ENCODE measurements at regions of chr7 and their contacts with region 1.

Region 1: DNA sequence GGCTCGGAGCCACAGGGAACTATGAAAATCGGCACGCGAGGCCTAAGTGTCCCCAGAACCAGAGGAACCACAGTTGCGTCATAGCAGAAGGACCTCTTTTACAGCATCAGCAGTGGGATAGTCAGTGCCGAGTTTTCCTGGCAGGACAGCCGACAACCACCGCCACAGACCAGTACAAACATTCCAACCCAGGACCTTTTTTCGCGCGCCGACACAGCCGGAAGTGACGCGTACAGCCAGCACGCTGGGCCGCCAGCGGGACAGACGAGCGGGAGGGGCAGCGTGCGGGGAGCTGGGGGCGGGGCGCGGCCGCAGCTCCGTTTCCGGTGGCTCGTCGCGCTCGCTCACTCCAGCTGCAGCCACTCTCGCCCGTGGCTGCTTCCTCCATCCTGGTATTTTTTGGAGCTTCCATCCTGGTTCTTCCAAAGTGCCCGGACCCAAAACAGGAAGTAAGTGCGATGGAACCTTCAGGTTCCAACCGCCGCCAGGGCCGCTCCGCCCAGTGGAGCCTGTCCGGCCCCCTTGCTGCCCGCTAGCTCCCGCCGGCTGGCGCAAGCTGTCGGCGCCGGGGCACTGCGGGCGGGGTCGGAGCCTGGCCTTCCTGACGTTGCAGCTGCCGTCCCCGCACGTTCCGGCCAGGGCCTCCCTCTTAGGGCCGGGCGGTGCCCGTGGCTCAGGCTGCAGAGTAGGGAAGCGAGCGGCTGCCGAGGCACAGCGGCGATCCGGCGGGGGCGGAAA is at the start of gene DMTF1:
- DNase-seq: peak; percentile 97
- H3K4me3 ChIP-seq: peak within 1 kb of the TSS; percentile 51 to 96 (median 58)
- H3K27ac ChIP-seq: peak within 1 kb of the TSS; percentile 81
- H3K4me1 ChIP-seq: peaks cover 24% of the 10 kb centered on the region
- H3K27me3 ChIP-seq: no peaks in the 10 kb centered on the region
- CTCF ChIP-seq: no peak
- total RNA-seq, gene DMTF1: 52.4 to 53.2 TPM

Region 2: GRCh38 chr7:86926732-86927131 is 225.5 kb before region 1 on chr7:
- CTCF ChIA-PET with region 1: no interaction called
- dilution Hi-C with region 1: no loop called
- in situ Hi-C with region 1: loop called in 1 of 2 experiments (anchors 10 kb)
- intact Hi-C with region 1: loop called (anchors 1 kb)
- DNase-seq: peak; percentile 24
- H3K4me3 ChIP-seq: no peak overlapping the region
- H3K27ac ChIP-seq: no peak overlapping the region
- H3K4me1 ChIP-seq: no peaks in the 10 kb centered on the region
- H3K27me3 ChIP-seq: no peaks in the 10 kb centered on the region
- CTCF ChIP-seq: peak; percentile 63 to 78

Region 3: DNA sequence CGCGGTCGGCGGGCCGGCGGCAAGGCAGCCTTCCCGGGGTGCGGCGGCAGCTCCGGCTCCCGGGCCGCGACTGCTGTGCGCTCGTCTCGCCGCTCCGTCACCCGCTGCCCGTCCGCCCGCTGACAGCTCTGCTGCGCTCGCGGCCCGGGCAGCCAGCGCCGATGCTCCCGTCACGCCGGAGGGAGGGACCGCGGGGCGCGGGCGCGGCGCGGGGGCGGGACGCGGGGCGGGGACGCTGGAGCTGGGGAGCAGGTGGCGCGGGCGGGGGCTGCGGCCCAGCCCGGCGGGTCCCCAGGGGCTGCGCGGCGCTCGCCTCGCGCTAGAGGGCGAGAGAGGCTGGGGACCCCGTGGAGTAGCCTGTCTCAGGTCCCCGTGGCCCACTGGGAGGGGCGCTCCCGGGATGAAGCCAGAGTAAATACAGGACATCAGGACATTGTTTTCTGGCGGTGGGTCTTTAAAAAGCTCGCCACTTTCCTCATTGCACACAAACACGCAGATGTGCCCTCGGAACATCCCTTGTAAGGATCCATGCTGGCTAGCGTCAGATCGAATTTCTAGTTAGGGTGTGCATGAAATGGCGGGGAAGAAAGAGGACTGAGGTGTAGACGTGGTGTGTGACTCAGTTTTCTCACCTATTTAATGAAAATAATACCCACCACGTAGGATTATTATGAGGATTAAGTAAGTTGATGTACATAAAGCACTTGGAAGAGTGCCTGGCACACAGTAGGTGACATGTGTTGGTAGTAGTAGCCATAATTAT is 92.6 kb before region 1 on chr7 and contains the start of gene ELAPOR2:
- CTCF ChIA-PET with region 1: no interaction called
- dilution Hi-C with region 1: no loop called
- in situ Hi-C with region 1: no loop called
- intact Hi-C with region 1: loop called (anchors 5 kb)
- DNase-seq: peak; percentile 25
- H3K4me3 ChIP-seq: peak within 1 kb of the TSS; percentile 29 to 59 (median 46)
- H3K27ac ChIP-seq: no peak within 1 kb of the TSS
- H3K4me1 ChIP-seq: peaks cover 6% of the 10 kb centered on the region
- H3K27me3 ChIP-seq: no peaks in the 10 kb centered on the region
- CTCF ChIP-seq: no peak
- total RNA-seq, gene ELAPOR2: 3.5 to 24.3 TPM

Region 4: DNA sequence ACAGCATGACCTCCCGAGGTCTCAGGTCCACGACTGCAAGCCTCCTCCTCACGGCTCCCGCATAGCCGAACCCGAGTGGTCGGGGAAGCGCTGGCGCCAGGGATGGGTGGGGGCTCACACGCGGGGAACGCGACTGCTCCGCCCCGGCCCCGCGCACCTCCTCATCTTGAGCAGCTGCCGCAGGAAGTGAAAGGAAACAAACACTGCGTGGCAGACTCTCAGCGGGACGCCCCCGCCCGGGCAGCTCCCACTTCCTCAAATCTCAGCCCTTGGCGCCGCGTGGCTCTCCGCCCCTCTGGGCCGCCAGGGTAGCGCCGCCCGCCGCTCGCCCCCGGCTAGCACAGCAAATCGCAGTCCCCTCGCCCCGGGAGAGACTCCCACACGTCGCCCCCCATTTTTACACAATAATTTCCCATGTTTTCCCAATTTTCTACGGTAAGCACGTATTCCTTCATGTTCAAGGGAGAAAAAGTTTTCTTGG is 67.3 kb after region 1 on chr7 and contains the start of gene TMEM243:
- CTCF ChIA-PET with region 1: interaction called, 9 read pairs
- dilution Hi-C with region 1: no loop called
- in situ Hi-C with region 1: no loop called
- intact Hi-C with region 1: loop called (anchors 1 kb)
- DNase-seq: peak; percentile 47
- H3K4me3 ChIP-seq: peak within 1 kb of the TSS; percentile 73 to 97 (median 97)
- H3K27ac ChIP-seq: peak within 1 kb of the TSS; percentile 69
- H3K4me1 ChIP-seq: peaks cover 23% of the 10 kb centered on the region
- H3K27me3 ChIP-seq: no peaks in the 10 kb centered on the region
- CTCF ChIP-seq: peak in 1 of 2 donors; percentile 5
- total RNA-seq, gene TMEM243: 11.0 to 19.5 TPM

Region 5: DNA sequence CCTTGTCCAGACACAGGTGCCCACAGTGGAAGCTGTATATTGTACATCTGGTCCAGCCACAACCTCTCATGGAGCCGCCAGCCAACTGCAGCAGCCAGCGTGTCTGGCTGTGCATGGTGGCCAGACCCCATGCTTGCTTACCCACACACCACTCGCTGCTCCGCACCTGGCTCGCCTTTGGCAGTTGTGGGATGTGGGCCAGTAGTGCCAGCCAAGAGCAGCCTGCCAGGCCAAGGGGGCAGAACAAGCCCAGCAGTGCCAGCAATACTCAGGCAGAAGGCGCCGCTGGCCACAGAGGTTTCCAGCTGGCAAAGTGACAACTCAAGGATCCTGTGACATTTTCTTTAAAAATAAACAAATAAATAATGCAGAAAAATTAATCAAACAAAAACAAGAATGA is 79.0 kb after region 1 on chr7:
- CTCF ChIA-PET with region 1: interaction called, 6 read pairs
- dilution Hi-C with region 1: no loop called
- in situ Hi-C with region 1: no loop called
- intact Hi-C with region 1: loop called (anchors 2 kb)
- DNase-seq: no peak
- H3K4me3 ChIP-seq: no peak overlapping the region
- H3K27ac ChIP-seq: no peak overlapping the region
- H3K4me1 ChIP-seq: no peaks in the 10 kb centered on the region
- H3K27me3 ChIP-seq: peaks cover 3% of the 10 kb centered on the region
- CTCF ChIP-seq: no peak

Region 6: GRCh38 chr7:87416682-87417587 is 264.7 kb after region 1 on chr7:
- CTCF ChIA-PET with region 1: interaction called, 5 read pairs
- dilution Hi-C with region 1: no loop called
- in situ Hi-C with region 1: no loop called
- intact Hi-C with region 1: loop called (anchors 10 kb)
- DNase-seq: peak; percentile 44
- H3K4me3 ChIP-seq: no peak overlapping the region
- H3K27ac ChIP-seq: no peak overlapping the region
- H3K4me1 ChIP-seq: no peaks in the 10 kb centered on the region
- H3K27me3 ChIP-seq: no peaks in the 10 kb centered on the region
- CTCF ChIP-seq: peak; percentile 56

Measured in mammary epithelial cell (primary cell).